Activated naive CD8-positive, alpha-beta T cell treated with anti-CD3 and anti-CD28 coated beads, Interleukin-2, amount 10 ng/mL, durations not matched to agents 7 days and 5 days (primary cell): ENCODE measurements at regions of chr19 and their contacts with region 1.

Region 1: DNA sequence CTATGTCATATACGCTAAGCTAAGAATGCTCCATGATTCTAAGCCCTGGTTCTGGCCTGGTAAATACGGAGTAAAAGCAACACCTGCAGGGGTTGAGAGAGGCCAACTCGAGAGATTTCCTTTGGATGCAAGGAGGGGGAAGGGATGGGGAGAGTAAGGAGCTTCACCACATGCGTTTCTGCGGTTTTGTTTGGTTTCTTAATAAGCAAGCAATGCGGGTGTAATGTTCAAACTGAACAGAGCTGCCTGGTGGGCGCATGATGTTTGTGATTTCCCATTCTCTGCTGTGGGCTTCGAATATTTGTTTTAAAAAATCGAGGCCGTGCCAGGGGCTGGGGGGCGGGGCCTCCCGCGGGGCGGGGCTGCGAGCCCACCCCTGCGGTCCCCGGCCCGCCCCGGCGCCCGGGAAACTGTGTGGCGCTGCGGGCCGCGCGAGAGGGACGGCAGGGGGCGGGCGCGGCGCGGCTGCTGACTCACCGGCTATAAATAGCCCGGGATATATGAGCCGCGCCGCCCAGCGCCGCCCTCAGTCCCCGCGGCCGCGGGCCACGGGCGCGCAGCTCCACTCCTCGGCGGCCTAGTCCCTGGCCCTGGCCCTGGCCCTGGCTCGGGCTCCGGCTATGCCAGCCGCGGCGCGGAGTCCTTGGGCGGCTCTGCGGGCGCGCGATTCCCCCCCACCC is 5.1 kb downstream of the BBC3 start:
- DNase-seq: peak; percentile 94
- ATAC-seq: peak; percentile 69
- H3K4me3 Mint-ChIP-seq: peak overlapping the region; percentile 45
- H3K27ac Mint-ChIP-seq: peak overlapping the region; percentile 69
- H3K4me1 Mint-ChIP-seq: peaks cover 7% of the 10 kb centered on the region
- H3K27me3 Mint-ChIP-seq: no peaks in the 10 kb centered on the region

Region 2: GRCh38 chr19:47130591-47131227 is 95.2 kb before region 1 on chr19 and contains the start of gene SAE1:
- POLR2A ChIA-PET with region 1: interaction called, 12 read pairs
- DNase-seq: peak; percentile 96
- ATAC-seq: peak; percentile 92
- H3K4me3 Mint-ChIP-seq: peak within 1 kb of the TSS; percentile 94
- H3K27ac Mint-ChIP-seq: peak within 1 kb of the TSS; percentile 93
- H3K4me1 Mint-ChIP-seq: peaks cover 38% of the 10 kb centered on the region
- H3K27me3 Mint-ChIP-seq: no peaks in the 10 kb centered on the region
- total RNA-seq, gene SAE1: 108 to 114 TPM

Region 3: GRCh38 chr19:47157431-47158321 is 68.2 kb before region 1 on chr19:
- POLR2A ChIA-PET with region 1: interaction called, 23 read pairs
- DNase-seq: no peak
- ATAC-seq: peak; percentile 19
- H3K4me3 Mint-ChIP-seq: peak overlapping the region; percentile 73
- H3K27ac Mint-ChIP-seq: peak overlapping the region; percentile 86
- H3K4me1 Mint-ChIP-seq: peaks cover 39% of the 10 kb centered on the region
- H3K27me3 Mint-ChIP-seq: no peaks in the 10 kb centered on the region

Region 4: GRCh38 chr19:47186446-47187334 is 39.2 kb before region 1 on chr19:
- POLR2A ChIA-PET with region 1: interaction called, 31 read pairs
- DNase-seq: peak; percentile 69
- ATAC-seq: peak; percentile 81
- H3K4me3 Mint-ChIP-seq: peak overlapping the region; percentile 81
- H3K27ac Mint-ChIP-seq: peak overlapping the region; percentile 99
- H3K4me1 Mint-ChIP-seq: peaks cover 60% of the 10 kb centered on the region
- H3K27me3 Mint-ChIP-seq: no peaks in the 10 kb centered on the region

Region 5: GRCh38 chr19:47210689-47211316 is 15.1 kb before region 1 on chr19:
- POLR2A ChIA-PET with region 1: interaction called, 52 read pairs
- DNase-seq: peak; percentile 66
- ATAC-seq: peak; percentile 77
- H3K4me3 Mint-ChIP-seq: peak overlapping the region; percentile 21
- H3K27ac Mint-ChIP-seq: peak overlapping the region; percentile 96
- H3K4me1 Mint-ChIP-seq: peaks cover 10% of the 10 kb centered on the region
- H3K27me3 Mint-ChIP-seq: no peaks in the 10 kb centered on the region

Region 6: DNA sequence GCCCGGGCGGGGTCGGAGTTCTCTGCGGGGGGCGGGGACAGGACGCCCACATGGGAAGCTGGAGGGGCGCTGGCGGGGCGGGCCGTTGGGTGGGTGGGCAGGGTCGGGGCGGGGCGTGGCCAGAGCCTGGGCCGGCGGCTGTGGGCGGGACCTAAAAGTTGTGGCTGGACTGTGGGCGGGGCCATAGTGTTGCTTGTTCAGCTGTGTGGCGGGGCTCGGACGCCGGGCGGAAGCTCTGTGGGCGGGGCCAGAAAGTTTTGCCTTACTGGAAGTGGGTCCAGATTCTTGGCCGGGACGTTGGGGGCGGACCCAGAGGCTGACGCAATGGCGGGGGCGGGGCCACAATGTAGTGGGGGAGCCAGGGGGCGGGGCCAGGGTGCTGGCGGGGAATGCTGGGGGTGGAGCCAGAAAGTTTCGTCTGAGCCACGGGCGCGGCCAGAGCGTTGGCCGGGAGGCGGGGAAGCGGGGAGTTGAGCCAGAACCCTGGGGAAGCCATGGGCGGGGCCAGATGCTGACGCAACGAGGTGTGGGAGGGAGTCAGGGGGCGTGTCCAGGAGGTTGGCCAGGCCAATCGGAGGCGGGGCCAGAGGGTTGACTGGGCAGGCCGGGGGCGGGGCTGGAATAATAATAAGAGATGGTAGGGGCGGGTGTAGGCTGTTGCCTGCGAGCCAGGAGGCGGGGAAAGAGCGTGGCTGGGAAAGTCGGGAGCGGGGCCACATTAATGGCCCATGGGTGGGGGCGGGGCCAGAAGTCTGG is 31.0 kb after region 1 on chr19:
- POLR2A ChIA-PET with region 1: interaction called, 30 read pairs
- DNase-seq: peak; percentile 100
- ATAC-seq: peak; percentile 90
- H3K4me3 Mint-ChIP-seq: peak overlapping the region; percentile 97
- H3K27ac Mint-ChIP-seq: peak overlapping the region; percentile 96
- H3K4me1 Mint-ChIP-seq: peaks cover 29% of the 10 kb centered on the region
- H3K27me3 Mint-ChIP-seq: no peaks in the 10 kb centered on the region

Region 7: DNA sequence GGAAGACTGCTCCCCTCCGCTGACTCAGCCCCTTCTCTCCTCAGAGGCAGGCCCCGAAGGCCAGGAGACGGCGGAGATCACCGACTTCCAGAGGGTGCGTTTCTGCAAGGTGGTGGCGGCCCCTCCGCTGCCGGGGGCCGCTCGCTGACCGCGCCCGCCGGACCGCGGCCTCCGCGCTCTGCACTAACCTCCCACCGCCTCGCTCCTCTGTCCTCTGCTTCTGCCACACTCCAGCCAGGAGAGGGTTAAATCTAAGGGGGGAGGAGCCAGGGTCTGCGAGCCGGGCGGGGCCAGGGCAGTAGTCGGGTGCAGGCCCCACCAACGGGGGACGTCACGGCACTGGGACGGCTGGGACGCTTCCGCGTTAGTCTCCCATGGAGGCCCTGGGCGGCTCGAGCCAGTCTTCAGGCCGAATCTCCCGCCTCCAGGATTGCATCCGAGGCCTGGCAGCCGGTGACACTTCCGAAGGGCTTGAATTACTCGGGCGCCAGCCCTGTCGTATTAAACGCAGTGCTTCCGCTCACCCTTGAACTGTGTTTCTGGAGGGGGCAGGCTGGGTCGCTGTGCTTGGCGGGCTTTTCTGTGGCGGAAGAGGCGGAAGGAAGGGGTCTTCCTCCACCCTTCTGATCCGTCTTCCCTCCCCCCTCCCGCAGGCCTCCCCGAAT is 47.6 kb after region 1 on chr19:
- POLR2A ChIA-PET with region 1: interaction called, 21 read pairs
- DNase-seq: peak; percentile 92
- ATAC-seq: peak; percentile 74
- H3K4me3 Mint-ChIP-seq: peak overlapping the region; percentile 98
- H3K27ac Mint-ChIP-seq: peak overlapping the region; percentile 98
- H3K4me1 Mint-ChIP-seq: peaks cover 13% of the 10 kb centered on the region
- H3K27me3 Mint-ChIP-seq: no peaks in the 10 kb centered on the region

Region 8: GRCh38 chr19:47284324-47284899 is 58.5 kb after region 1 on chr19:
- POLR2A ChIA-PET with region 1: no interaction called
- DNase-seq: no peak
- ATAC-seq: peak; percentile 37
- H3K4me3 Mint-ChIP-seq: no peak overlapping the region
- H3K27ac Mint-ChIP-seq: no peak overlapping the region
- H3K4me1 Mint-ChIP-seq: peaks cover 4% of the 10 kb centered on the region
- H3K27me3 Mint-ChIP-seq: no peaks in the 10 kb centered on the region